Heart right ventricle (tissue), 16 donors: ENCODE measurements at regions of chr5 and their contacts with region 1.

Region 1: GRCh38 chr5:139392678-139393496 is 2.0 kb downstream of the PROB1 start:
- DNase-seq: peak in 1 of 2 donors; percentile 66
- ATAC-seq: peak in 7 of 8 donors; percentile 4 to 29 (median 16)
- H3K4me3 ChIP-seq: peak overlapping the region; percentile 50 to 80 (median 69)
- H3K27ac ChIP-seq: peak overlapping the region in 9 of 10 donors; percentile 89 to 97 (median 94)
- H3K4me1 ChIP-seq: peaks cover 7 to 89% (median 71%) of the 10 kb centered on the region in 9 donors
- H3K27me3 ChIP-seq: peaks cover 0 to 35% (median 0%) of the 10 kb centered on the region in 7 donors
- CTCF ChIP-seq: peak in 7 of 9 donors; percentile 35 to 64 (median 49)

Region 2: DNA sequence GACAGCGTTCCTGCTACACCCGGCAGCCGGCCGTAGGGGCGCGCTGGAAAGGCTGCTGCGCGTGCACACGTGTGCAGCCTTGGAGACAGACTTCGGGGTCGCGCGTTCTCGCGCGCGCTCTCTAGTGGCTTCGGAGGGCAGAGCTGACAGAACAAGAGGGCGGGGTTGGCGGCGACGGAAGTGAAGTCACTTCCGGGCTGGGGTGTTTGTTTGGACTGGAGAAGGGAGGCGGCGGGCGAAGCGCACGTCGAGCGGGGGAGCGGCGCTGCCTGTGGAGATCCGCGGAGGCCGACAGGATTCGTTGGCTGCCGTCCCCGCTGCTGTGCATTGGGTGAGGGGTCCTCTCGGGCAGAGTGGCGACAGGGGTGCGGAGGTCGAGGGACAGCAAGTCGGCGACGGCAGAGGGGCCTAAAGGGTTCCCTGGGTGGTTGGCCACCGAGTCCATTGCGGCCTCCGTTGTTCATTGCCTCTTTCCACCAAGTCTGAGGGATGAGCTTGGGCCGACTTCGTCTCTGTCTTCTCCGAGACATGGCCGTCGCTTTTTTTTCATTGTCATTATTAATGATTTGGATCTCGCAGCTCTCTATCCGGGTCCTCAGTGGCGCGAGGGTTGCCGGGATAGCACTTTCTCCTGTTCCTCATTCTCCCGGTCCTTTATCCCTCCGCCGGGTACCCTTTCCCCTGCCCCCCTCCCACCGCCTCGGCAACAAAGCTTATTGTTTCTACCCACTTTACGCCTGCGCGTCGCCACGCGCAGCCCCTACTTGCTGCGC is 51.1 kb before region 1 on chr5 and contains the start of gene PAIP2:
- intact Hi-C with region 1: loop called in 1 of 10 experiments (anchors 5 kb)
- DNase-seq: peak; percentile 98
- ATAC-seq: peak; percentile 97 to 99 (median 98)
- H3K4me3 ChIP-seq: peak within 1 kb of the TSS; percentile 69 to 97 (median 84)
- H3K27ac ChIP-seq: peak within 1 kb of the TSS; percentile 92 to 99 (median 98)
- H3K4me1 ChIP-seq: peaks cover 0 to 40% (median 31%) of the 10 kb centered on the region in 9 donors
- H3K27me3 ChIP-seq: no peaks in the 10 kb centered on the region
- CTCF ChIP-seq: peak; percentile 43 to 93 (median 76)
- total RNA-seq, gene PAIP2: 126 to 173 (median 139) TPM

Region 3: GRCh38 chr5:139417214-139417613 is 24.3 kb after region 1 on chr5:
- intact Hi-C with region 1: loop called in 1 of 10 experiments (anchors 1 kb)
- DNase-seq: peak in 1 of 2 donors; percentile 76
- ATAC-seq: peak; percentile 56 to 76 (median 70)
- H3K4me3 ChIP-seq: peak overlapping the region in 1 of 10 donors; percentile 4
- H3K27ac ChIP-seq: peak overlapping the region; percentile 68 to 93 (median 89)
- H3K4me1 ChIP-seq: peaks cover 40 to 74% (median 67%) of the 10 kb centered on the region in 9 donors
- H3K27me3 ChIP-seq: no peaks in the 10 kb centered on the region
- CTCF ChIP-seq: no peak

Region 4: DNA sequence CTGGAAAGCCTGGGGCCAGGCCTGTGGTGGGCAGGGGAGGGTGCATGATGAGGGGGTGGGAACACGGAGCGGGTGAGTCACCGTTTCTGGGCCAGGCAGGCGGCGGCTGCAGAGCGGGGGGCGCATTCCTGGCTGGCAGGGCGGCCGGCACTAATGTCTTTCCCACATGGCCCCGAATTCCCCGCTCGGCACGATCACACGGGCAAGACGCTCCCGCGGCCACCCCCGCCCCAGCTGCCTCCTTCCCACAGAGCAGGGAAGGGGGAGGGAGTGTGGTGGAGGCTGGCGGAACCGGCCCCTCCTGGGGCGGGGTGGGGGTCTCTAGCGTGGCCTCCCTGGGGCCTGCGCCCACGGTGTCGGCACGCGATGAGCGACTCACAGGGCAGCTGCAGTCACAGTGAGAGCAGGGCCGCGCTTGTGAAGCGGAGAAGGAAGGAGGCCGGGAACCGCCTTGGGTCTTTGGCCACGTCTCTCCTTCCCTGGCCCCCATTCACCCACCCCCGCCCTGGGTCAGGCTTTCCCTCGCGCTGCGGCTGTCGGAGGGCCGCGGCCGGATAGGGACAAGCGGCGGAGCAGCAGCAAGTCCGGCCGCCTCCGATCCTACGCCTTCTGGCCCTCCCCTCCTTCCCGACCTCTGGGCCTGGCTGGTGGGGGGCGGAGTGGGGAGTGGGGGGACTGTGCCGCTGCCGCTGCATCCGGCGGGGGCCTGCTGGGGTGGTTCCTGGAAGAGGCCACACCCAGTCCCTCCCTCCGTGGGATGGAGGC is 304.2 kb after region 1 on chr5:
- intact Hi-C with region 1: no loop called
- DNase-seq: peak; percentile 85 to 87
- ATAC-seq: peak; percentile 79 to 90 (median 83)
- H3K4me3 ChIP-seq: peak overlapping the region; percentile 20 to 63 (median 45)
- H3K27ac ChIP-seq: peak overlapping the region; percentile 87 to 98 (median 90)
- H3K4me1 ChIP-seq: peaks cover 15 to 78% (median 51%) of the 10 kb centered on the region in 9 donors
- H3K27me3 ChIP-seq: peaks cover 0 to 36% (median 0%) of the 10 kb centered on the region in 7 donors
- CTCF ChIP-seq: no peak